ENCODE measurements at regions of chr5 and their contacts with region 1.

Region 1: GRCh38 chr5:94849821-94850736 is 231.6 kb downstream of the SLF1 start:
- DNase-seq: peak; percentile 29
- CTCF ChIP-seq: peak; percentile 74

Region 2: GRCh38 chr5:94524841-94525697 is 325.0 kb before region 1 on chr5:
- CTCF ChIA-PET with region 1: interaction called, 33 read pairs
- POLR2A ChIA-PET with region 1: no interaction called
- DNase-seq: peak; percentile 30
- CTCF ChIP-seq: peak; percentile 71

Region 3: DNA sequence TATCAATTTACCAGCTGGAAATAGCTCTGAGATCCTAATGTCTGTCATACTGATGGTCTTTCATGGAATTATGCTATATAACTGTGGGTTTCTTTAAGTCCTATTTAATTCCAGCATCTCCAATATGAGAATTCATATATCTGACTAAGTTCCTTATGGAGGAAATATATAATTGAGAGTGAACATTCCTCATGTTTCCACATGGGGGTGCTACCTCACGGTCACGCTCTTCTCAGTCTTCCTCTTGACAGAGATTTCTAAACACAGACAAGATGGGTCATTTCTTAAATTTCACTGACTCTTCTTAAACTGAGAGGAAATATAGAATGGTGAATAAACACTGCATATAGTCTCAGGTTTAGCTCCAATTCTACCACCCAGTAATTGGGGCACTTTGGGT is 19.6 kb before region 1 on chr5:
- CTCF ChIA-PET with region 1: interaction called, 17 read pairs
- POLR2A ChIA-PET with region 1: no interaction called
- DNase-seq: no peak
- CTCF ChIP-seq: peak; percentile 12

Region 4: GRCh38 chr5:94870511-94871183 is 20.6 kb after region 1 on chr5:
- CTCF ChIA-PET with region 1: interaction called, 14 read pairs
- POLR2A ChIA-PET with region 1: no interaction called
- DNase-seq: no peak
- CTCF ChIP-seq: no peak

Region 5: DNA sequence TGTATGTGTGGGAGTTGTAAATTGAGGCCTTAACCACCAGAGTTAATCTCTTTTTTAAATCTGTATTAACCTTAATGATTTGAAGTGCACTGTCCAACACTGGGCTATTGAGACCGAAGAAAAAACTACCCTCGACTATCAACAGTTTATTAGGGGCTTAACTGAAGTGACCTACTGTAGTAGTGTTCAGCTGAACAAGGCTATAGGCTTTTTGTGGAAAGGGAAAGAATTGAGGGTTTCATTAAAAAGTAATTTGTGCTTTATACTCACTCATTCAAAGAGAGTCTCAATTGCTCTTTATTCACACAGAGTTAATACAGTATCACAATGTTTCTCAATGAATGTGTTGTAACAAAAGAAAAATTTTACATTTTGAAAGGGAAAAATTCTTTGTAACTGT is 35.9 kb after region 1 on chr5:
- CTCF ChIA-PET with region 1: no interaction called
- POLR2A ChIA-PET with region 1: no interaction called
- DNase-seq: no peak
- CTCF ChIP-seq: no peak